A549 (cell line): ENCODE measurements at regions of chr7 and their contacts with region 1.

Region 1: DNA sequence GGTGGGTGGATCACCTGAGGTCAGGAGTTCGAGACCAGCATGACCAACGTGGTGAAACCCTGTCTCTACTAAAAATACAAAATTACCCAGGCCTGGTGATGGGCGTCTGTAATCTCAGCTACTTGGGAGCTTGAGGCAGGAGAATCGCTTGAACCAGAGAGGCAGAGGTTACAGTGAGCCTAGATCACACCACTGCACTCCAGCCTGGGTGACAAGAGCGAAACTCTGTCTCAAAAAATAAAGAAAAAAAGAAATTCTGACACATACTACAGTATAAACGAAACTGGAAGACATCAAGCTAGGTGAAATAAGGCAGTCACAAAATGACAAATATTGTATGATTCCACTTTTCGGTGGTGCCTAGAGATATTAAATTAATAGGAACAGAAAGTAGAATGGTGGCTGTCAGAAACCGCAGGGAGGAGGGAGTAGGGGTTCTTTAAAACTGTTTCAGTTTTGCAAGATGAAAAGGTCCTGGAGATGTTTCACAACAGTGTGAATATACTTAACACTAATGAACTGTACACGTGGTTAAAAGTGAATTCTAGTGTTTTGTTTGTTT is 23.2 kb downstream of the PILRA start:
- DNase-seq: no peak
- ATAC-seq: no peak
- H3K4me3 ChIP-seq: no peak overlapping the region
- H3K27ac ChIP-seq: no peak overlapping the region
- H3K4me1 ChIP-seq: no peaks in the 10 kb centered on the region
- CTCF ChIP-seq: no peak
- EP300 ChIP-seq: no peak
- POLR2A ChIP-seq: no peak
- RAD21 ChIP-seq: no peak

Region 2: DNA sequence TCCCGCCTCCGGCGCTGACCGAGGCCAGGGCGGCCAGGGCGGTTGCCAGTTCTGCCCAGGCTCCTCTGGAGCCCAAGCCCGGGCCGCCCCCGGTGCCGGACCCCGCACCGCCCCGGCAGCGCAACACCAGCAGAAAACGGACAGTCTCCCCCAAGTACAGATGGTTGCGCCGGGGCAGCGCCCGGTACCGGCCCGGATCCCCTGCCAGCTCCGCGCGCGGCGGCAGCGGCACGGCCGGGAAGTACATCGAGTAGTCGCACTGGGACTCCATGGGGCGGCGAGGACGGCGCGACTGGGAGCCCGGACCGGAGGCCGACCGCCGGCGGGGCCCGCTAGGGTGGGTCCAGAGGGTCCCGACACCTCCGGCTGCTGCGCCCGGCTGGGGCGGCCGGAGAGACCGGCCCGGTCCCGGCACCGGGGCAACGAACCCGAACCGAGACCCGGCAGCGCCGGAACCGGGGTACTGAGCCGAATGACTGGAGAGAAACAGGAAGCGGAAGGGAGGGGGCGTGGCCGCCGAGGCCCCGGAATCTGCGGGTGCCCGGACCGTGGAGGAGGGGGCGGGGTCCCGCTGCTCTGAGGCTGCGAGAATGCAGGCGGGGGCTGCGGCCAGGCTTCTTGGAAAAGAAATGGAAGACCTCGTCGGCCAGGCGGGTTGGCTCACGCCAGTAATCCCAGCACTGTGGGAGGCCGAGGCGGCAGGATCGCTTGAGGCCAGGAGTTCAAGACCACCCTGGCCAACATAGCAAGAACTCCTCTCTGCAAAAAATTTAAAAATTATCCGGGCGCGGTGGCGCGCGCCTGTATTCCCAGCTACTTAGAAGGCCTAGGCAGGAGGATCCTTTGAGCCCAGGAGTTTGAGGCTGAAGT is 238.0 kb before region 1 on chr7 and contains the start of gene TRAPPC14:
- CTCF ChIA-PET with region 1: interaction called, 3 read pairs
- POLR2A ChIA-PET with region 1: interaction called, 10 read pairs
- DNase-seq: peak; percentile 81 to 98
- ATAC-seq: peak; percentile 79 to 89
- H3K4me3 ChIP-seq: peak within 1 kb of the TSS; percentile 90
- H3K27ac ChIP-seq: peak within 1 kb of the TSS; percentile 83 to 96
- H3K4me1 ChIP-seq: peaks cover 46% of the 10 kb centered on the region
- CTCF ChIP-seq: no peak
- EP300 ChIP-seq: no peak
- POLR2A ChIP-seq: peak; percentile 81
- RAD21 ChIP-seq: no peak
- polyA plus RNA-seq, gene TRAPPC14: 3.4 and 5.7 TPM in 2 replicates